Lower leg skin (tissue), 4 donors: ENCODE measurements at regions of chr2 and their contacts with region 1.

Region 1: DNA sequence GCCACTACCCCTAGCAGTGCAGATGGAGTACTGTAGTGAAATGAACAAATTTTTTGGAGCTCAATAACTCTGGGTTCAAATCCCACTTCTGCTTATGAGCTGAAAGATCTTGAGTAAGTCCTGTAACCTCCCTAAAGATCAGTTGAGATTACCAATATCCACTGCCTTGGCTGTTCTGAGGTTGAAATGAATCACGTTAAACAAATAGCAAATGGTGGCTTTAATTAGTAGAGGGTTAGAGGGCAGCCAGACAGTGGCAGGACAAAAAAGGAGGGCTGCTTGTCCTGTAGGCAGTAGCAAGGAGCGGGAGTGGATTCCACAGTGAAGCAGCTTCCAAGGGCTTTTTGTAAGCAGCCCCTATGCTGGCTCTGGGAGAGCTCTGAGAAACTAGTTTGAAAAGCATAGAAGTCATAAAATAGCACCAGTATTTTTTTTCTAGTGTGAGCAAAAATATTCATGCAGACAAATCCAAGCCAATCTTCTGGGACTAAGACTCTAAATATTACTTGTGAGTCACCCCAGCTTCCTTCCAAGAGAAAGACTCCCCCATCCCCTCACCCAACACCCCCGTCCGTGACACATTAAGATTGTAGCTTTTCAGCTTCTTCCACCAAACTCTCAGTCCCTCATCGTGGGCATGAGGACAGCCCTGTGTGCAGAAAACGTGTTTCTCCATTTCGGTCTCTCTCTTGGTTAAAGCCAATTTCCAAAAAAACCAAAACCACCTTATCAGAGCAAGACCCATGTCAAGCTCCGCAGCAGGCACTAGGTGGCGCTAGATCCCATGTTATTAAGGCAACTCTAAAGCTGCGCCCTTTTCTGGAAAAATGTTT is 123.5 kb upstream of the LGALSL start:
- DNase-seq: peak; percentile 69 to 95
- H3K4me3 ChIP-seq: no peak overlapping the region
- CTCF ChIP-seq: peak in 1 of 3 donors; percentile 62
- POLR2A ChIP-seq: no peak

Region 2: GRCh38 chr2:64488050-64488974 is 157.8 kb after region 1 on chr2:
- intact Hi-C with region 1: loop called (anchors 5 kb)
- DNase-seq: peak; percentile 40 to 93
- H3K4me3 ChIP-seq: no peak overlapping the region
- CTCF ChIP-seq: peak in 1 of 3 donors; percentile 86
- POLR2A ChIP-seq: no peak

Region 3: DNA sequence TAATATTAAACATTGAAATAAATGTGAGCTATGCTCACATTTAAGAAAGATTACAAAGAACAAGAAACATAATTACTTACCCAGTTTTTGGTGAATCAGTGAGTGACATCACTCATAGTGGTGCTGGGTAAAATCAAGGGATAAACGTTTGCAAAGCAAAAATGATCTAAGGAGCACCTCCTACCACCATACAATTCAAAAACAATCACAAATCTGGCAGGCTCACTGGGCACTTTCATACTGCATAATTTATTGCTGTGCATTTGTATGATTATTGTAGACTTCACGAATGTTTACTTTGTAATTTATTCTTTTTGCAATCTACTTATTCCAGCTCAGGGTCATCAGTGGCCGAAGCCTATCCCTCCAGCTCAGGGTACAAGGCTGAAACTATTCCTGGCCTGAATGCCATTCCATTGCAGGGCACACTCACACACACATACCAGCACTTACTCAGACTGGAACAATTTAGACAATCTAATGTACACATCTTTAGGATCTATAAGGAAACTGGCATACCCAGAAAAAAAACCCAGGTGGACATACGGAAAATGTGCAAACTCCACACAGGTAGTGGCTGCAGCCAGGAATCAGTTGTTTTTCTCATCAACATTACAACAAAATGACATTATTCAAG is 228.1 kb after region 1 on chr2:
- intact Hi-C with region 1: loop called (anchors 5 kb)
- DNase-seq: no peak
- H3K4me3 ChIP-seq: no peak overlapping the region
- CTCF ChIP-seq: no peak
- POLR2A ChIP-seq: no peak